ENCODE measurements at regions of chr3 and their contacts with region 1.

Region 1: GRCh38 chr3:186953011-186953487 is 22.7 kb downstream of the ST6GAL1 start:
- DNase-seq: peak; percentile 79
- H3K4me3 ChIP-seq: no peak overlapping the region
- H3K27ac ChIP-seq: peak overlapping the region; percentile 26
- H3K4me1 ChIP-seq: peaks cover 18% of the 10 kb centered on the region
- H3K27me3 ChIP-seq: no peaks in the 10 kb centered on the region
- CTCF ChIP-seq: no peak
- POLR2A ChIP-seq: no peak

Region 2: DNA sequence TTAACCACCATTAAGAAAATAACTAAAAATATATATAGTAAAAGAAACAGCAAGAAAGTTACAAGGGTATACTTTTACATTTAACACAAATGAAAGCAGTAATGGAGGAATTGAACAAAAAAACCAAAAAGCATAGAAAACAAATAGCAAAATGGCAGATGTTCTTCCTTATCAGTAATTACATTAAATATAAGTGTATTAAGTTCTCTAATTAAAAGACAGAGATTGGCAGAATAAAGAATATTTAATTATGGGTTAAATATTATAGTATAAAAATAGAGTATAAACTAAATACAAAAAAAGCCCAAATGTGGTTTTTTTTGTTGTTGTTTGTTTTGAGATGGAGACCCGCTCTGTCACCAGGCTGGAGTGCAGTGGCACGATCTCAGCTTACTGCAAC is 1719.7 kb before region 1 on chr3:
- CTCF ChIA-PET with region 1: no interaction called
- POLR2A ChIA-PET with region 1: no interaction called
- dilution Hi-C with region 1: no loop called
- intact Hi-C with region 1: no loop called
- DNase-seq: no peak
- H3K4me3 ChIP-seq: no peak overlapping the region
- H3K27ac ChIP-seq: no peak overlapping the region
- H3K4me1 ChIP-seq: no peaks in the 10 kb centered on the region
- H3K27me3 ChIP-seq: no peaks in the 10 kb centered on the region
- CTCF ChIP-seq: no peak
- POLR2A ChIP-seq: no peak

Region 3: DNA sequence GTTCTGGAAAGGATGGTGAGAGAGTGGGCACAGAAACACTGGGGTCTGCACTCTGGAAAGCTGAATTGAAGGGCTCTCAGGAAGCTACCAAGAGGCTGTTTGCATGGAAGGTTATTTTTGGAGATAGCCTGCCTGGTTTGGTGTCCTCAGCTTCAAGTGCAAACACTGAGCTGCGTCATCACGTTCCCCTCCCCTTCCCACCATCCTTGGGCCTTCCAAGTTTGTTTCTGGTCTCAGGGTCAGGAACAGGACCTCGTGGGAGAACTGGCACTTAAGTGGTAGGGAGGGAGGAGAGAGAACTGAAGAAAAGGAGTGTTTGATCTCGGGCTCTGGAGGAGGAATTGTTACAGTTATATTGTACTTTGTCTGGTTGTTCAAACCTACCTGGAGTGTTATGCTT is 12.1 kb before region 1 on chr3:
- CTCF ChIA-PET with region 1: interaction called, 5 read pairs
- POLR2A ChIA-PET with region 1: no interaction called
- dilution Hi-C with region 1: no loop called
- intact Hi-C with region 1: loop called (anchors 1 kb)
- DNase-seq: peak; percentile 38
- H3K4me3 ChIP-seq: no peak overlapping the region
- H3K27ac ChIP-seq: no peak overlapping the region
- H3K4me1 ChIP-seq: no peaks in the 10 kb centered on the region
- H3K27me3 ChIP-seq: no peaks in the 10 kb centered on the region
- CTCF ChIP-seq: no peak
- POLR2A ChIP-seq: no peak